Sciatic nerve (tissue), 2 donors: ENCODE measurements at regions of chr9 and their contacts with region 1.

Region 1: DNA sequence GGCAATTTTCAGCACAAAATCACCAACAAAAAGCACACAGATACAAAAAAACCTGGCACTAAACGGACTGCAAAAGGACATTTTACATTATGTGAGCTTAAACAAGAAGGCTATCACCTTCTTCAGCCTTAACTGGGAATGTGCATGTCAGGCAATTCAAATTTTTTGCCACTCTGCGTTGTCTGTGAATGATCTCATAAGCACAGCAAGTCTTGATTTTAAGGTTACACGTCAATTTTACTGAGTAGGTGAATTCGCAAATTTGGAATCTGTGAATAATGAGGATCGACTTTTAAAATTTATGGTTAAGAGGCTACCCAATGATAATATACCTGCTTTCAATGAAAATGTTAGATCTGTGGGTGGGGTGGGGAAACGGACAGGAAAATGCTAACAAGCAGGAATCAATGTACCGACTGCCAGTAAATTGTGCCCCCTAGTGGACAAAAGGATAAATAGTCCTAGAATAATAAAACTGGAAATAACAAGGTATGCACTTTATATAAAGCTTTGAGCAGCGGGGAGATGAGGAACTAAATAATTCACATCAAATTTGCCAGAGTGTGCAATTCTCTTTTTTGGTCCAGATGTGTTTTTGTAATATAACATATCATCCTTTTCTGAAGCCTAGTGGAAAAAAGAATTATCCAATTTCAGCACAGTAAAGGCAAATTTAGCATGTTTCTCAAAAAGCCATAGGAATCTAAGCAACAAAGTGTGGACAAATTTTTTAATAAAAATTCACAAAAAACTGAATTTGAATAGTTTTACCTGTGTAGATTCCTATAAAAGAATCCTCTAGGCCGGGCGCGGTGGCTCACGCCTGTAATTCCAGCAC is 20.5 kb downstream of the EQTN start:
- DNase-seq: no peak
- ATAC-seq: peak; percentile 41

Region 2: DNA sequence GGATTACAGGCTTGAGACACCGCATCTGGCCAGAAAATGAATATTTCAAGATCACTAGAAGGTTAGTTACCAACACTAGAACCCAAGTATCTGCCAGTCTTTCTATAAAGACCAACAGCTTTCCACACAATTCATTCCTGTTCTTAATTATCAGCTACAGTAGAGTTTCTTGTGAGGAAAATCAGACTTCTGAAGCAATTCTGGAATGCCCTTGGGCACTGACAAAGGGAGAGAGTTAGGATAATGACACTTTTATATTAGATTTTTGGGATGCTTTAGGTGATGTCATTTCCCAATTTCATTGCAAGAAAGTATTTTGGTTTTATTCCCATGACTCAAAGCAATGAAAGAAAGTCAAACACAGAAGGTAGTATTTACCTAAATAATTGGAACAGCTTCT is 1101.1 kb before region 1 on chr9:
- intact Hi-C with region 1: no loop called
- DNase-seq: no peak
- ATAC-seq: no peak

Region 3: DNA sequence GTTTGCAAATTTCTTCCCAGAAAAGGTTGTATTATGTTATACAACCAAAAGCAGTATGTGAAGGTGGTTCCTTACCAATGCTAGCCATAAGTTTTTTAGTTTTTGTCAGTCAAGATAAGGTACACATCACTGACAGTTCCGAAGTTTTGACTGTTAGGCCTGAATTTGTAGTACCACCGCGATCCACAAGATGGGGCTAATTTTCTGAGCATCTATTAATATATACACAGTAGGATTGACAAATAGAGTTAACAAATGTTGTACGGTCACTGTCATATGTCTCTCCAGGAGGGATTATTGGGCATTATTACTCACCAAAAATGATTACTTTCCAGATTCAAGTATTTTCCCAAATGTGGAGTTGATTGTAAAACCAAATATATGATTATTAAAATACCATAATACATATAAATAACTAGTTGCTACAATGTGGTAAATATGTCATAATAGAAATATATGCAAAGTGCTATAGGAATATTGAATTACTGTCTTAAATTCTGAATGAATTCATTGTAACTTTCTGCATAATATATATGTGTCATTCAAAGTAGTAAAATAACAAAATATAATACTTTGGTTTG is 242.5 kb before region 1 on chr9:
- intact Hi-C with region 1: loop called (anchors 10 kb)
- DNase-seq: peak; percentile 75
- ATAC-seq: peak; percentile 60

Region 4: DNA sequence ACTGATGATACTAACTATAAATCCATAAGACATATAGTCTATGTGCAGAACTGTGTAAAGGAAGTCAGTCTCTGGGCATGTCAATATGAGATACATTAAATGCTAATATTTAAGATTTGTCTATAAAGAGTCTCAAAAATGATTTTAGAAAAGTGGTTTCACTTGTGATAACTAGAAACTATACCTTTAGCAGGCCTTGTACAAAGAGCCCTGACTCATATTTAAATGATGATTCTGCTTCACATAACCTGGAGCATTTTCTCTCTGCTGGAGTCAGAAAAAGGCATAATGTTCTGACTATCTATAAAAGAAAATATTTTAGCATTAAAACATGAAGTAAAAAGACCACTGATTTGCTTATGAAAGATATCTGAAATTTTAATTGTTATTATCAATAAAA is 281.9 kb after region 1 on chr9:
- intact Hi-C with region 1: no loop called
- DNase-seq: no peak
- ATAC-seq: no peak